Activated CD4-positive, alpha-beta memory T cell treated with anti-CD3 and anti-CD28 coated beads for 36 hours (primary cell): ENCODE measurements at regions of chr12 and their contacts with region 1.

Region 1: GRCh38 chr12:14769969-14770495 is 33.2 kb downstream of the WBP11 start:
- DNase-seq: peak; percentile 94
- H3K4me3 Mint-ChIP-seq: peak overlapping the region; percentile 98
- H3K27ac Mint-ChIP-seq: peak overlapping the region; percentile 100
- H3K4me1 Mint-ChIP-seq: peaks cover 39% of the 10 kb centered on the region
- H3K27me3 Mint-ChIP-seq: no peaks in the 10 kb centered on the region

Region 2: GRCh38 chr12:14239350-14239934 is 530.6 kb before region 1 on chr12:
- CTCF ChIA-PET with region 1: interaction called, 5 read pairs
- POLR2A ChIA-PET with region 1: no interaction called
- intact Hi-C with region 1: loop called (anchors 5 kb)
- DNase-seq: peak; percentile 62
- H3K4me3 Mint-ChIP-seq: peak overlapping the region; percentile 69
- H3K27ac Mint-ChIP-seq: peak overlapping the region; percentile 74
- H3K4me1 Mint-ChIP-seq: peaks cover 24% of the 10 kb centered on the region
- H3K27me3 Mint-ChIP-seq: no peaks in the 10 kb centered on the region

Region 3: DNA sequence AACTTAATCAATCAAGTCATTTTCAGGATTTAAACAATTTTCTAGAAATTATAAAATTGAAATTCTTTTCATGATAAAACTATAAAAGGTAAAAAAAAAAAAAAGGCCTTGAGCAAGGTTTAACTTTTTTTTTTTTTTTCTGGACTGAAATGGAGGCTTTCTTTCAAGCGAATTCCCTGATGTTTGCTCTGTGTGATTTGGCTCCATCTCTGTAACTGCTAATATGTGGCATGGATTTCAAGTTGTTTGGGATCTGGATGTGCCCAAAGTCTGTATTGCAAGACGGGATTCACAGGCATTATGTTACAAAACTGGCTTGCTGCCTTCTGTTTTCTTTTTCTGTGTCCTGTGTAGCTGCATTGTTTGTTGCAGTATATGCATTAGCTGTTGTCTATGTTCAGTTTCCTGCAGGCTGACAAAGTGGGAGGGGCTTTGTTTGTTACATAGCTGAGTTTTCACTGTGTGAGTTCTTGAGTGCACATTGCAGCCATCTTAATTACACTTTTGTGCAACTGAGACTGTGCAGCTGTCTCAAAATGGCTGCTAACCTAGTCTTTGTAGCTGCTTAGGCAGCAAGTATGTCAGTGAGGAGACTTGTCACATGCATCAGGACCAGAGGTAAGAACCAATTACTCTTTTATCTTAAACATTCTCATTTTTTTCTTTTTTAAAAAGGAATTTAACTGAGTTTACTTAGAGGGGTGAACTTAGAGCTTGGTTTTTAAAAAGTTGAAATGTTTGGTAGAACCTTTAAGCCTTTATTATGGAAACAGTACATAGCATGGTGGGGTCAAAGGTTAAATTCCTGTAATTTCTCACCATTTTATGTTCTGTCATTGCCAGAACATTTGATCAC is 385.0 kb before region 1 on chr12:
- CTCF ChIA-PET with region 1: no interaction called
- POLR2A ChIA-PET with region 1: no interaction called
- intact Hi-C with region 1: loop called (anchors 5 kb)
- DNase-seq: peak; percentile 77
- H3K4me3 Mint-ChIP-seq: peak overlapping the region; percentile 81
- H3K27ac Mint-ChIP-seq: peak overlapping the region; percentile 96
- H3K4me1 Mint-ChIP-seq: peaks cover 60% of the 10 kb centered on the region
- H3K27me3 Mint-ChIP-seq: no peaks in the 10 kb centered on the region

Region 4: DNA sequence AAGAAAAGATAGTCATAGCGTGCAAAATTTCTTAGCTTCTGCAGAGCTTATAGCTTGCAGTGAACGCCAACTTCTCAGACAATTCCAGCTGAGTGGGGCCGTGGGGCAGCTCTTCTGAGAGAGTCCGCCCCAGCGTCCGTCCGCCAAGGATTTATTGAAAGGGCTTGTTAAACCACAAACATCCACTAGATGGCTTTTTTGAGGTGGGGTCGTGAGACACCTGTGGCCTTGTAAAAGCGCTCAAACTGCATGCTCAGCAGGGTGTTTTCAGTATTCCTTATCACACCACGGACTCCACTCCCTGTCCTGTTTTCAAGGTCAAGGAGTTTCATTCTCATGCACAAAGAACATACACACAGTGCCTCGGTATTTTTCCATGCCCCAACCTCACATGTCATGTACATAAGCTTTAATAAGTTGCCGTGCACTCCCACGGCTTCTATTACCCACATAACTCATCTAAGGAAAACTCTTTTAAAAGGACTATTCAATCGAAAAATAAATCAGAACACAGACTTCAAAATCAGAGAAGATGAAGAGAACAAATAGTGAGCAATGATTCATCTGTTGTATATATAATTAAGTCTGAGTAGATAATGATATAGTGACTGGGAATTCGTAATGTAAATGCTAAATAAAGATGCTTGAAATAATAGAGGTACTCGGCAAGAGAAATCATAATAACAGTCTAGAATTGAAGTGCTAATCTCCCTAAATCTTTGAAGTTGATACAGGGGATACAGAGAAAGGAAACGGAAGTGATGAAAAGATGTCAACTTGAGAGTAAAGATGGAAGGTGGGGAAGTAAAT is 13.5 kb before region 1 on chr12:
- CTCF ChIA-PET with region 1: no interaction called
- POLR2A ChIA-PET with region 1: no interaction called
- intact Hi-C with region 1: no loop called
- DNase-seq: no peak
- H3K4me3 Mint-ChIP-seq: no peak overlapping the region
- H3K27ac Mint-ChIP-seq: no peak overlapping the region
- H3K4me1 Mint-ChIP-seq: peaks cover 10% of the 10 kb centered on the region
- H3K27me3 Mint-ChIP-seq: no peaks in the 10 kb centered on the region

Region 5: DNA sequence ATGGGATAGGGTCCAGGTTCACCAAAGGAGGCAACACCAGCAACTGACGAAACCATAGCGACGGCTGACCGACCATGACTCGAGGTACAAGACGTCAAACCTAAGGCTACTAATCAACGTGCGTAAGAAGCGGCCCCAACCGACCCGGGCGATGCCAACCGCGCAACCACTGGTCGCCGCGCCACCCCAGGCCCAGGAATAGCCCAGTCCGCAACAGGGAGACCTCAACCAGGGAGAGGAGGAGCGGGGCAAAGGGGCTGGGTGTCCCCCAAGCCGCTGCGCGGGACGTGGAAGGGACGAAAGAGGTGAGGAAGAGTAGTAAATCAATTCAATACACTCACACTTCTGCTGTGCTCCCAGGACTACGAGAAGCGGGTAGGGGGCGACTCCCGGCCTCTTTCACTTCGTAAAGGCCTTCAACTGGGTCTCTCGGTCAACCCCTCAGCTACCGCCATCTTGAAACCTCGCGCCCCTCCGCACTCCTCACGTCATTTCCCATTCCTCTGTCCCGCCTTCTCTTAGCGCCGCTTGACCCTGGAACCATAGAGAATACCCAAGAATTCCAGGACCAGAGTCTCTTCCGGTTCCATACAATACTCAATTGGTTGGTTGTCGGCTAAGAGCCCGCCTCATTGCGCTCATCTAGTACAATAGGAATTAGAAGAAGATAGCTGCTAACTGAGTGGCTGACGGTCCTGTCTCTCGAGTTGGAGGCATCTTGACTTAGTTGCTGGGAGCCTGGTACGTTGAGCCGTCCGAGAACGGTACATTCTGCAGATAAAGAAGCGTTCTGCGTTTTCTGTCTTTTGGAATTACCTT is 33.2 kb after region 1 on chr12 and contains the starts of genes C12orf60 and WBP11:
- CTCF ChIA-PET with region 1: interaction called, 33 read pairs
- POLR2A ChIA-PET with region 1: interaction called, 95 read pairs
- intact Hi-C with region 1: loop called (anchors 1 kb)
- DNase-seq: peak; percentile 93
- H3K4me3 Mint-ChIP-seq: no peak within 1 kb of the TSS
- H3K27ac Mint-ChIP-seq: no peak within 1 kb of the TSS
- H3K4me1 Mint-ChIP-seq: peaks cover 35% of the 10 kb centered on the region
- H3K27me3 Mint-ChIP-seq: no peaks in the 10 kb centered on the region
- total RNA-seq, gene C12orf60: 3.3 to 3.4 TPM
- total RNA-seq, gene WBP11: 131 to 134 TPM

Region 6: GRCh38 chr12:14948672-14949071 is 178.6 kb after region 1 on chr12:
- CTCF ChIA-PET with region 1: interaction called, 6 read pairs
- POLR2A ChIA-PET with region 1: interaction called, 10 read pairs
- intact Hi-C with region 1: loop called (anchors 1 kb)
- DNase-seq: peak; percentile 69
- H3K4me3 Mint-ChIP-seq: peak overlapping the region; percentile 80
- H3K27ac Mint-ChIP-seq: peak overlapping the region; percentile 99
- H3K4me1 Mint-ChIP-seq: peaks cover 82% of the 10 kb centered on the region
- H3K27me3 Mint-ChIP-seq: no peaks in the 10 kb centered on the region

Region 7: DNA sequence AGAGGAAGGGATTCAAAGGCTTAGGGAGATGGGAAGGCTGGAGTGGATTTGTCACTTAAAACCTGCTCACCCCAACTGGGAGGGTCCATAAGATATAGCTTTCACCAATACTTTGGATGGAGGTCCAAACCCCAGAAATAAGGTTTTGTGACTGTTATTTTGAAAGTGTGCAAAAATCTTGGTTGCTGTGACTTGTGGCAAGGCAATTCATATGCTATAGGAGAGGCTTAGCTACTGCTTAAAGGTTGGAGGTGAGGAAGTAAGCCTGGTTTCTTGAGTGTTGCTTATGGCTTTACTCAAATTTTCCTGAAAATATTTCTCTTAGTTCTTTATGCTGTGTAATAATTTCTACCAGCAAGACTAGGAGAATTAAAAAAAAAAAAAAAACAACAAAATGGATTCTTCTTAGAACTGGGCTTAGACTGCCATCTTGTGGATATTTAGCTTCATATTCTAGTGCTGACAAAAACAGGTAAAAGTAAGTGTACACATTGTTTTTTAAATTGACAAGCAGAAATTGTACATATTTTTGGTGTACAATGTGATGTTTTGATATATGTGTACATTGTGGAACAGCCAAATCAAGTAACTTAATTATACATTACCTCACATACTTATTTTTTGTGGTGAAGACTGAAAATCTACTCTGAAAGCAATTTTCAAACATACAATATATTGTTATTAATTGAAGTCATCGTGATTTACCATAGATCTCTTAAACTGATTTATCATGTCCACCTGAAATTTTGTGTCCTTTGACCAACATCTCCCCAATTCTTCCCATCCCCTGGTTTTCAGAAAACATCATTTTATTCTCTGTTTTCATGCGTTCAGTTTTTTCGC is 225.8 kb after region 1 on chr12:
- CTCF ChIA-PET with region 1: interaction called, 10 read pairs
- POLR2A ChIA-PET with region 1: interaction called, 6 read pairs
- intact Hi-C with region 1: no loop called
- DNase-seq: no peak
- H3K4me3 Mint-ChIP-seq: no peak overlapping the region
- H3K27ac Mint-ChIP-seq: no peak overlapping the region
- H3K4me1 Mint-ChIP-seq: peaks cover 25% of the 10 kb centered on the region
- H3K27me3 Mint-ChIP-seq: no peaks in the 10 kb centered on the region